Activated naive CD4-positive, alpha-beta T cell treated with anti-CD3 and anti-CD28 coated beads for 36 hours (primary cell): ENCODE measurements at regions of chr18 and their contacts with region 1.

Region 1: DNA sequence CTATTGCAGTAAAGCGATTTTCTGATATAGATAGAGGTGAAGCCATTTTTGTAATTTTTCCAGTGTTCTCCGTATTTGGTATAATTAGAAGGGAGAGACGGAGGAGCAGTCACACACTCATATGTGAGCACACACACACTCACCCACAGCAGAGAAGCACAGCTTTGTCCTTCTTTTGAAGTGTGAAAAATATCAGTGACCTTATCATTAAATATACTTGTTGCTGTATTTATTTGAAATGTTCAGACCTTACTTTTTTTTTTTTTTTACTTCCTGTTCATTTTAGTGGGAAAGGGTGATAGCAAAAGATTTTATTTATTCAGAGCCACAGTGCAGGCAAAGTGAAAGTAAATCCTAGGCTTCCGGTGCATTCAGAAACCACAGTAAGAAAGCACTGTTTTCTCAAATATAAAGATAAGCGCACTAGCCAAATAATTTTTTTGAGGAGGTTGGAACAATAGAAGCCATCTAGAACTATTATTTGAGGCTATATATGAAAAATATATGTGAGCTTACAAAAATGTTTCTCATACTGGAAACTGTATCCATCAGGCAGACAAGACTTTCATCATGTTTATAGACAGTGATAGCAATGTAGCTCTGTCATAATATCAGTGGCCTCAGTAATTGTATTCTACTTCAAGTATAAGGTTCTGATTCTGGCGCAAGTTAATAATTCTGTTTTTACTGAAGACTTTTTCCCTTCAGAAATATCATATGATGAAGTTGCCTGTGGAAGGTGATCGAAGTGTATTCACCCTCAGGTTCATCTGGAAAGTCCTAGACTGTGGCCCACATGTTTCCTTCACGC is 37.2 kb downstream of the TSHZ1 start:
- DNase-seq: peak; percentile 36
- H3K4me3 Mint-ChIP-seq: peak overlapping the region; percentile 77
- H3K27ac Mint-ChIP-seq: peak overlapping the region; percentile 93
- H3K4me1 Mint-ChIP-seq: peaks cover 60% of the 10 kb centered on the region
- H3K27me3 Mint-ChIP-seq: no peaks in the 10 kb centered on the region

Region 2: DNA sequence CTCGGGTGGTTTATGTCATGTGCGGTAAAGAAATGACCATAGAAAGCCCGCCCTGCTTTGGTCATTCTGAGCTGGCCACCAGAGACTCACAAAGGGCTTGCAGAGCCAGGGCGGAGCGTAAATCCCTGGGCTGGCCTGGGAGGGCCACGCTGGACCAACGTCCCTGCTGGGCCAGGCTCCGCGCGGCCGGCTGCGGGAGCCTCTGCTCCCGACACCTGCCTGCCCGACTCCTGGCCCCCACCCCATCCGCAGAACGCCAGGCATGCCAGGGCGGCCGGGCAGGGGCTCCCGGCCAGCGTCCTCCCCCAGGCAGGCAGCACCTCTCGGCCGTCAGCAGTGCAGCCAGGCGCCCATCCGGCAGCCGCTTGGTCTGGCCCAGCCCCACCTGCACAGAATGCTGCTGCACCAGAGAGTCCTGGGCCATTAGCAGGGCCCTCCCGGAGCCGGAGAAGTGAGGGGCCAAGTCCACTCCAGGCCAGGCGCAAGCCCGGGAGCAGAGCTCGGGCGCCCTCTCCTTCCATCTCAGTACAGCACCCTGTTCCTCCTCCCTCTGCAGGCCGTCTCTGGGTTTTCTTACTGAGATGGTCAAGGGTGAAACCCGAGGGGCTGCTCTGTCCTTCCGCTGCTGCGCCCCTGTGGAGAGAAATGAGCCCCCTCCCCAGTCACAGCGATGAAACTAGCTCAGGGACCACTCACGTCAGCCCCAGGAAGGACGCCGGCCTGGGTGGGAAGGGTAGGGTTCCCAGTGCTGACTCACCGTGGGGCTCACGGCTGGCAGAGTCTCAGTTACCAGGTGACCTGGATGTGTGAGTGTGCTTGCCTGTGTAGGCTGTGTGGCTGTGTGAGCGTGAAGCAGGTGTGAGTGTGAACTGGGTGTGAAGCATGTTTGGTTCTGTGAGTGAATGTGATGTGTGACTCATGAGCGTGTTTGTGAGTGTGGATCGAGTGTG is 122.2 kb before region 1 on chr18:
- CTCF ChIA-PET with region 1: no interaction called
- intact Hi-C with region 1: no loop called
- DNase-seq: peak; percentile 15
- H3K4me3 Mint-ChIP-seq: no peak overlapping the region
- H3K27ac Mint-ChIP-seq: no peak overlapping the region
- H3K4me1 Mint-ChIP-seq: peaks cover 4% of the 10 kb centered on the region
- H3K27me3 Mint-ChIP-seq: peaks cover 11% of the 10 kb centered on the region

Region 3: GRCh38 chr18:75261430-75262223 is 13.8 kb after region 1 on chr18:
- CTCF ChIA-PET with region 1: interaction called, 4 read pairs
- intact Hi-C with region 1: loop called (anchors 1 kb)
- DNase-seq: peak; percentile 23
- H3K4me3 Mint-ChIP-seq: no peak overlapping the region
- H3K27ac Mint-ChIP-seq: peak overlapping the region; percentile 63
- H3K4me1 Mint-ChIP-seq: peaks cover 46% of the 10 kb centered on the region
- H3K27me3 Mint-ChIP-seq: no peaks in the 10 kb centered on the region

Region 4: GRCh38 chr18:75784398-75784789 is 536.6 kb after region 1 on chr18:
- CTCF ChIA-PET with region 1: no interaction called
- intact Hi-C with region 1: no loop called
- DNase-seq: no peak
- H3K4me3 Mint-ChIP-seq: no peak overlapping the region
- H3K27ac Mint-ChIP-seq: no peak overlapping the region
- H3K4me1 Mint-ChIP-seq: no peaks in the 10 kb centered on the region
- H3K27me3 Mint-ChIP-seq: peaks cover 20% of the 10 kb centered on the region